Activated CD4-positive, alpha-beta memory T cell treated with anti-CD3 and anti-CD28 coated beads for 36 hours (primary cell): ENCODE measurements at regions of chr12 and their contacts with region 1.

Region 1: DNA sequence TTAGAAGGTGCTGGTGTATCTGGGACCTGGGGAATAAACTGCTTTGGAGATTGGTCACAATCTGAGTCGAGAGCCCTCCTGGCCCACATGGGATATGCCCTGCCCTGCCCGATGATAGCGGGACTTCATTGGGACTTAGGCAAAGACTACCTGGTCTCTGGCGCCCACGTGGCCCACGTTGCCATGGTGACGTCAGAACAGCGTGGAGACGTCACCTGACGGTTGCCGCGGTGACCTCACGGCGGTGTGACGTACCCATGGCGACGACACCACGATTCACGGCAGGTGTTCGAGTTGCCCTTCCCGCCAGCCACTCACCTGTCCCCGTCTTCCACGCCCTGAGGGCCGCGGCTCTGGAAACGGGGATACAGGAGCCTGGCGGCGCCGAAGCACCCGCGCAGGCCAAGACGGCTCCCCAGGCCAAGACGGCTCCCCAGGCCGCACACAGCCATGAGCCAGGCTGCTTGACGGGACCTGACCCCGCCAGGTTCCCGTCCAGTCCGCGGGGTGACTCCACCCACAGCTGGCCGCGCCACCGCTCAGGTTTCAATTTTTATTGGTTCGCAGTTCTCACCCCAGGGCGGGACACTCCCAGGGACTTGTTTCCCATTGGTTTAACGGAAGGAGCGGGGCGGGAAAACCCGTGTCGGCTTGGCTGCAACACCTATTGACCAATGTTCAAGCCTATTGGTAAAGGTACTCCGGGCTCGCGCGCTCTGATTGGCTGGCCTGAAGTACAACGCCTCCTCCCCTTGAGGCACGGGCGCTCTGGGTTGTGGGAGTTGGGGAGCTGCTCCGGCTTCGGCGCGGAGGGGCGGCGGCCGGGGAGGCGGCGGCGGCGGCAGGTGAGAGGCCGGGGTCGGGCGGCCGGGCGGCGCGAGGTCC is at the starts of genes MMAB and MVK:
- DNase-seq: peak; percentile 100
- H3K4me3 Mint-ChIP-seq: peak within 1 kb of the TSS; percentile 86
- H3K27ac Mint-ChIP-seq: peak within 1 kb of the TSS; percentile 85
- H3K4me1 Mint-ChIP-seq: peaks cover 27% of the 10 kb centered on the region
- H3K27me3 Mint-ChIP-seq: no peaks in the 10 kb centered on the region
- total RNA-seq, gene MMAB: 42.4 to 48.3 TPM
- total RNA-seq, gene MVK: 21.2 TPM

Region 2: GRCh38 chr12:109637348-109637747 is 64.1 kb after region 1 on chr12:
- CTCF ChIA-PET with region 1: no interaction called
- POLR2A ChIA-PET with region 1: no interaction called
- intact Hi-C with region 1: no loop called
- DNase-seq: no peak
- H3K4me3 Mint-ChIP-seq: no peak overlapping the region
- H3K27ac Mint-ChIP-seq: no peak overlapping the region
- H3K4me1 Mint-ChIP-seq: no peaks in the 10 kb centered on the region
- H3K27me3 Mint-ChIP-seq: no peaks in the 10 kb centered on the region

Region 3: GRCh38 chr12:109713187-109713984 is 140.1 kb after region 1 on chr12 and contains the start of gene FAM222A:
- CTCF ChIA-PET with region 1: no interaction called
- POLR2A ChIA-PET with region 1: interaction called, 4 read pairs
- intact Hi-C with region 1: loop called (anchors 1 kb)
- DNase-seq: peak; percentile 96
- H3K4me3 Mint-ChIP-seq: peak within 1 kb of the TSS; percentile 59
- H3K27ac Mint-ChIP-seq: no peak within 1 kb of the TSS
- H3K4me1 Mint-ChIP-seq: no peaks in the 10 kb centered on the region
- H3K27me3 Mint-ChIP-seq: peaks cover 31% of the 10 kb centered on the region
- total RNA-seq, gene FAM222A: 0.29 to 0.55 TPM

Region 4: GRCh38 chr12:109880016-109880931 is 307.0 kb after region 1 on chr12 and contains the start of gene GLTP:
- CTCF ChIA-PET with region 1: no interaction called
- POLR2A ChIA-PET with region 1: no interaction called
- intact Hi-C with region 1: loop called (anchors 10 kb)
- DNase-seq: peak; percentile 91
- H3K4me3 Mint-ChIP-seq: peak within 1 kb of the TSS; percentile 94
- H3K27ac Mint-ChIP-seq: peak within 1 kb of the TSS; percentile 79
- H3K4me1 Mint-ChIP-seq: peaks cover 45% of the 10 kb centered on the region
- H3K27me3 Mint-ChIP-seq: no peaks in the 10 kb centered on the region
- total RNA-seq, gene GLTP: 20.9 to 21.1 TPM